Naive thymus-derived CD8-positive, alpha-beta T cell (primary cell): ENCODE measurements at regions of chr12 and their contacts with region 1.

Region 1: DNA sequence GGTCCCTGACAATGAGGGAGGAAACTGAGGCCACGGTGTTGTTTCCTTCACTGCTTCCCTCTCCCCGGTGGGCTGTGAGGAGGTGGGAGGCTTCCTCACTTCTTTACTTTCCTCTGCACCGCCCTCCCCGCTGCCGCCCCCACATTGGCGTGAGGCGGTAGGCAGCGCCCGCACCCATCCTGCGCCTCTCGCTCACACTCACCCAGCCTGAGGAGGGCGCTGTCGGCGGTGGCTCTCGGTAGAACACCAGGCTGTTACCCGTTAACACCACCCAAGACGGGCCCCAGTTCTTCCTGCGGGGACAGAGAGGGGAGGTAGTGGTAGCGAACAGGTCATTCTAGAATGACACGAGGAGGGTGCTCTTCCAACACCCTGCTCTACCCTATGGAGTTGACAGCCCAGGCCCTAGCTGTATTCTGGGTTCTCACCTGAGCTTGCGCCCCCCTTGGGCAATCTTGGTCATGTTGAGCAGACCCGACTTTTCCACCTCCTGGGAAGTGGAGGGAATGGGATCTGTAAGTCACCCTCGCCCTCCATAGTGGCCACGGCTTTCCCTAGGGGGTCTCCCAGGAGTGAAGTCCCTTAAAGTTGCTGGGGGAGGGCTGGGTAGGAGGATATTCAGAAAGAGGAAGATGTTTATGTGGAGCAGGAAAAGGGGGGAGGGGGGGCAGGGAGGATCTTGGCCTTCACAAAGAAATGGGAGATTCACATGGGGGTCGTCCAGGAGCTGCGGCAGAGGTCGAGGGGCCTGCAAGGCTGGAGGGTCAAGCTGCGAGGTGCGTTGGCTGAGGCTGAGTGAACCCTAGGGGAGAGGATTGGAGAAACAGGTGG is 3.3 kb downstream of the ARHGAP9 start:
- DNase-seq: peak; percentile 59 to 90 (median 76)
- ATAC-seq: peak; percentile 13 to 41
- H3K4me3 Mint-ChIP-seq: peak overlapping the region; percentile 94 to 100 (median 98)
- H3K27ac Mint-ChIP-seq: peak overlapping the region; percentile 97 to 100 (median 100)
- H3K4me1 Mint-ChIP-seq: peaks cover 48 to 95% (median 88%) of the 10 kb centered on the region in 4 donors
- H3K27me3 Mint-ChIP-seq: no peaks in the 10 kb centered on the region

Region 2: GRCh38 chr12:57280211-57281062 is 195.9 kb before region 1 on chr12:
- POLR2A ChIA-PET with region 1: no interaction called
- DNase-seq: peak; percentile 36 to 81 (median 63)
- ATAC-seq: peak; percentile 100
- H3K4me3 Mint-ChIP-seq: peak overlapping the region; percentile 46 to 84 (median 68)
- H3K27ac Mint-ChIP-seq: peak overlapping the region; percentile 84 to 98 (median 94)
- H3K4me1 Mint-ChIP-seq: peaks cover 15 to 32% (median 22%) of the 10 kb centered on the region in 4 donors
- H3K27me3 Mint-ChIP-seq: no peaks in the 10 kb centered on the region

Region 3: GRCh38 chr12:57456145-57456700 is 20.2 kb before region 1 on chr12:
- POLR2A ChIA-PET with region 1: interaction called, 133 read pairs
- DNase-seq: peak in 7 of 10 donors; percentile 33 to 73 (median 55)
- ATAC-seq: peak; percentile 15 to 25
- H3K4me3 Mint-ChIP-seq: peak overlapping the region; percentile 52 to 85 (median 72)
- H3K27ac Mint-ChIP-seq: peak overlapping the region in 5 of 10 donors; percentile 5 to 89 (median 31)
- H3K4me1 Mint-ChIP-seq: peaks cover 25 to 41% (median 30%) of the 10 kb centered on the region in 4 donors
- H3K27me3 Mint-ChIP-seq: peaks cover 0 to 3% (median 0%) of the 10 kb centered on the region in 5 donors

Region 4: GRCh38 chr12:57462251-57462911 is 14.0 kb before region 1 on chr12:
- POLR2A ChIA-PET with region 1: interaction called, 133 read pairs
- DNase-seq: peak; percentile 78 to 93 (median 88)
- ATAC-seq: peak; percentile 63 to 66
- H3K4me3 Mint-ChIP-seq: peak overlapping the region; percentile 80 to 96 (median 90)
- H3K27ac Mint-ChIP-seq: peak overlapping the region; percentile 52 to 93 (median 87)
- H3K4me1 Mint-ChIP-seq: peaks cover 31 to 58% (median 43%) of the 10 kb centered on the region in 4 donors
- H3K27me3 Mint-ChIP-seq: peaks cover 0 to 3% (median 0%) of the 10 kb centered on the region in 5 donors

Region 5: DNA sequence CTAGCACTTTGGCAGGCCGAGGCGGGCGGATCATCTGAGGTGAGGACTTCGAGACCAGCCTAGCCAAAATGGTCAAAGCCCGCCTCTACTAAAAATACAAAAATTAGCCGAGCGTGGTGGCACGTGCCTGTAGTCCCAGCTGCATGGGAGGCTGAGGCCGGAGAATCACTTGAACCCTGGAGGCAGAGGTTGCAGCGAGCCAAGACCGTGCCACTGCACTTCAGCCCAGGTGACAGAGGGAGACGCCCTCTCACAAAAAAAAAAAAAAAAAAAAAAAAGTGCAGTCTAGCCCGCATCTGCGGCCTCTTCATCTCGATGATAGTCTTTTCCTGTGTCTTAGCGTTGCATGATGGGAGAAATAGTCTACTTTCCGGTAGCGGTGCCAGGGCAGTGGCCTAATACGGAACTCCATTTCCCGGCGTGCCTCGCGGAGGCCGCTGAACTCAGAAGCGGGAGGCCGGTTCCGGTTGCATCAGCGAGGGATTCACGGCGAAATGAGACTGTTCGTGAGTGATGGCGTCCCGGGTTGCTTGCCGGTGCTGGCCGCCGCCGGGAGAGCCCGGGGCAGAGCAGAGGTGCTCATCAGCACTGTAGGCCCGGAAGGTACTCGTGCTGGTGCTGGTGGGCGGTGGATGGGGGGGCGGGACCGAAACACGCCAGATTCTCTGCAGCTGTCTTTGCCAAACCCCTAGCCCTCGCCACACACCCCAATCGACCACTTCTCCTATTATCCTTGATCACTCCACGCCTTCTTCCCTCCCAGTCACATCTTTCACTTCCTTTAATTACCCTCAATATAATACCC is 11.4 kb after region 1 on chr12 and contains the start of gene MARS1:
- POLR2A ChIA-PET with region 1: interaction called, 65 read pairs
- DNase-seq: peak; percentile 76 to 95 (median 90)
- ATAC-seq: peak; percentile 97 to 98
- H3K4me3 Mint-ChIP-seq: peak within 1 kb of the TSS; percentile 92 to 99 (median 96)
- H3K27ac Mint-ChIP-seq: peak within 1 kb of the TSS; percentile 88 to 98 (median 97)
- H3K4me1 Mint-ChIP-seq: peaks cover 13 to 43% (median 39%) of the 10 kb centered on the region in 4 donors
- H3K27me3 Mint-ChIP-seq: no peaks in the 10 kb centered on the region
- polyA plus RNA-seq, gene MARS1: 81.0 to 93.5 (median 91.9) TPM